HCT116 (cell line): ENCODE measurements at regions of chr11 and their contacts with region 1.

Region 1: DNA sequence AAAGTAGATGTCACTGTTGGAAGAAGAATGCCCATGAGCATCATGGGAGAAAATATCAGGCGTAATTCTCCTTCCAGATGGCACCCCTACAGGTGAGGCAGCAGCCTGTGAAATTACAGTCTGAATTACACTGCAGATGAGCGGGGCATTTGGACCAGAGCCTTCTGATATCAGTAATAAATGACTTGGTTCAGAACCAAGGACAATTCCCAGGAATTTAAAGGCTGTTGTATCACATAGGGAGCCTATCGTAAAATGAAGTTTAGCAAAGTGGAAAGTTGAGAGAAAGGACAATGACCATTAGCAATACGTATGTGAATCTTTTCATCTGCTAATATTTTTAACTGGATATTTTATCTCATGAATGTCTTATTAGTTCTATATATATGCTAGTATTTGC is 61.3 kb downstream of the PRMT3 start:
- DNase-seq: no peak
- ATAC-seq: no peak
- H3K4me3 ChIP-seq: no peak overlapping the region
- H3K27ac ChIP-seq: no peak overlapping the region
- H3K4me1 ChIP-seq: no peaks in the 10 kb centered on the region
- H3K27me3 ChIP-seq: no peaks in the 10 kb centered on the region
- CTCF ChIP-seq: no peak
- POLR2A ChIP-seq: no peak
- RAD21 ChIP-seq: no peak

Region 2: DNA sequence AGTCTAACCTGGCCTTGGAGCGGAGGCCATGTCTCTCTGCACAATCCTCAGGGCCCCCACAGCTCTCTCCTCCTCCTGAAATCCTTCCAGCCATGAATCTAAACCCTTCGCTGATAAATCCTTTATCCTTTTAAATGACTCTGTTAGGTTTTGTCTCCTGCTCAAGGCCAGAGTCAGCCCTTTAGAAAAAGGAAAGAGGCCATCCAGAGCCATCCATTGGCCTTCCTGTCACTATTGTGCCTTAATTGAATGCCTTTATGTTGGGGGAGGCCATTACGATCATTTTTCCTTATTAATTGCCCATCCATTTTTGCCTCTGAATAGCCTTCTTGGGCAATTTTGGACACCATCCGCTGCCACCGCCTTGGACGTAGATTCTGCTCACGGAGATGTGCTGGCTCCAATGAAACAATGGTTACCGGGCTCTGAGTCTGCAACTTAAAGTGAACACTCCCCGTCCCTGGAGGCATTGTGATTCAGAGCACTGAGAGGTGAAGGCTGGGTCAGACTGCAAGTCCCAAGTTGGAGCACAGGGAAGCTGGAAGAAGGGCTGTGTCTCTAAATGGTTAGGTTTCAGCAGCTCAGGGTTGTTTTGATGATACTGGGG is 995.1 kb before region 1 on chr11:
- CTCF ChIA-PET with region 1: no interaction called
- POLR2A ChIA-PET with region 1: no interaction called
- RAD21 ChIA-PET with region 1: no interaction called
- intact Hi-C with region 1: no loop called
- DNase-seq: no peak
- ATAC-seq: no peak
- H3K4me3 ChIP-seq: no peak overlapping the region
- H3K27ac ChIP-seq: no peak overlapping the region
- H3K4me1 ChIP-seq: no peaks in the 10 kb centered on the region
- H3K27me3 ChIP-seq: peaks cover 67% of the 10 kb centered on the region
- CTCF ChIP-seq: no peak
- POLR2A ChIP-seq: no peak
- RAD21 ChIP-seq: no peak

Region 3: GRCh38 chr11:20415432-20415831 is 33.4 kb before region 1 on chr11:
- CTCF ChIA-PET with region 1: no interaction called
- POLR2A ChIA-PET with region 1: no interaction called
- RAD21 ChIA-PET with region 1: no interaction called
- intact Hi-C with region 1: loop called (anchors 5 kb)
- DNase-seq: no peak
- ATAC-seq: no peak
- H3K4me3 ChIP-seq: no peak overlapping the region
- H3K27ac ChIP-seq: no peak overlapping the region
- H3K4me1 ChIP-seq: no peaks in the 10 kb centered on the region
- H3K27me3 ChIP-seq: no peaks in the 10 kb centered on the region
- CTCF ChIP-seq: no peak
- POLR2A ChIP-seq: no peak
- RAD21 ChIP-seq: no peak